Mammary epithelial cell (primary cell): ENCODE measurements at regions of chr16 and their contacts with region 1.

Region 1: GRCh38 chr16:4116337-4117249 is at the start of gene ADCY9:
- DNase-seq: peak; percentile 53
- H3K4me3 ChIP-seq: peak within 1 kb of the TSS; percentile 36 to 63 (median 59)
- H3K27ac ChIP-seq: no peak within 1 kb of the TSS
- H3K4me1 ChIP-seq: peaks cover 20% of the 10 kb centered on the region
- H3K27me3 ChIP-seq: no peaks in the 10 kb centered on the region
- CTCF ChIP-seq: no peak
- total RNA-seq, gene ADCY9: 18.4 to 27.3 TPM

Region 2: GRCh38 chr16:3934491-3935181 is 182.0 kb before region 1 on chr16:
- CTCF ChIA-PET with region 1: no interaction called
- dilution Hi-C with region 1: no loop called
- in situ Hi-C with region 1: no loop called
- intact Hi-C with region 1: no loop called
- DNase-seq: no peak
- H3K4me3 ChIP-seq: no peak overlapping the region
- H3K27ac ChIP-seq: no peak overlapping the region
- H3K4me1 ChIP-seq: peaks cover 5% of the 10 kb centered on the region
- H3K27me3 ChIP-seq: no peaks in the 10 kb centered on the region
- CTCF ChIP-seq: no peak

Region 3: DNA sequence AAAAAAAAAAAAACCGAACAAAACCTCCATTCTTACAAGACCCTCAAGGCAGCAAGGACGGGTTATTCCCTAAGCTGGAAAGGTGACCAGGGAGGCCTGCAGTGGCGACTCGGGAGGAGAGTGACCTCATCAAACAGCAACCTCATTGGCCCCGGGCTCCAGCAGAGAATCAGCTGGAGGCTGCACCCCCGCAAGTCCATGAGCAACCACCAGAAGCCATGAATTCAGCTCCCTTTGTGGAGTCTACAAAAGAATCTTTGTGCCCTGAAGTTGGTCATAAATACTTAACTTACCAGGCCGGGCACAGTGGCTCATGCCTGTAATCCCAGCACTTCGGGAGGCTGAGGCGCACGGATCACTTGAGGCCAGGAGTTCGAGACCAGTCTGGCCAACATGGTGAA is 155.1 kb before region 1 on chr16:
- CTCF ChIA-PET with region 1: no interaction called
- dilution Hi-C with region 1: no loop called
- in situ Hi-C with region 1: no loop called
- intact Hi-C with region 1: no loop called
- DNase-seq: peak; percentile 58
- H3K4me3 ChIP-seq: no peak overlapping the region
- H3K27ac ChIP-seq: no peak overlapping the region
- H3K4me1 ChIP-seq: no peaks in the 10 kb centered on the region
- H3K27me3 ChIP-seq: peaks cover 7% of the 10 kb centered on the region
- CTCF ChIP-seq: no peak

Region 4: GRCh38 chr16:3999479-4000325 is 116.9 kb before region 1 on chr16:
- CTCF ChIA-PET with region 1: no interaction called
- dilution Hi-C with region 1: no loop called
- in situ Hi-C with region 1: no loop called
- intact Hi-C with region 1: loop called (anchors 5 kb)
- DNase-seq: no peak
- H3K4me3 ChIP-seq: no peak overlapping the region
- H3K27ac ChIP-seq: no peak overlapping the region
- H3K4me1 ChIP-seq: no peaks in the 10 kb centered on the region
- H3K27me3 ChIP-seq: no peaks in the 10 kb centered on the region
- CTCF ChIP-seq: no peak

Region 5: DNA sequence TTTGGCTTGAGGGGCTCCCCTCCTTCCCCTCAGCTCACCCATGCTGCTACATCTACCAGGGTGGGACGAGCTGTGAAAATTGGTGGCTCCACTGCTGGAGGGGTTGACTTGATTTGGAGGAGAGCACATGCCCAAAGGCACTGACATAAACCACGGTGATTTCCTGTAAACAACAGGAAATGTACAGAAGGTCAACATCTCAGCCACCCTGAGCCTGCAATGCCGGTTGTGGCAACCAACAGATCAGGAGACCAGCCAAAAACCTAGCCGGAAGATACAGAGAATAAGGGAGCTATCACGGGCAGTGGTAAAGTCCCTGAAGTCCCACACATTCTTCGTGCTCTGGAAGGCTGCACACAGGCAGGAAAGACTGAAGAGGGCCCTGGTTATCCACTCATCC is 56.6 kb before region 1 on chr16:
- CTCF ChIA-PET with region 1: no interaction called
- dilution Hi-C with region 1: loop called (anchors 5 kb)
- in situ Hi-C with region 1: no loop called
- intact Hi-C with region 1: no loop called
- DNase-seq: no peak
- H3K4me3 ChIP-seq: no peak overlapping the region
- H3K27ac ChIP-seq: no peak overlapping the region
- H3K4me1 ChIP-seq: no peaks in the 10 kb centered on the region
- H3K27me3 ChIP-seq: no peaks in the 10 kb centered on the region
- CTCF ChIP-seq: no peak

Region 6: GRCh38 chr16:4166821-4167220 is 50.2 kb after region 1 on chr16:
- CTCF ChIA-PET with region 1: no interaction called
- dilution Hi-C with region 1: loop called (anchors 5 kb)
- in situ Hi-C with region 1: no loop called
- intact Hi-C with region 1: no loop called
- DNase-seq: no peak
- H3K4me3 ChIP-seq: no peak overlapping the region
- H3K27ac ChIP-seq: no peak overlapping the region
- H3K4me1 ChIP-seq: no peaks in the 10 kb centered on the region
- H3K27me3 ChIP-seq: no peaks in the 10 kb centered on the region
- CTCF ChIP-seq: no peak

Region 7: GRCh38 chr16:4217204-4218131 is 100.9 kb after region 1 on chr16:
- CTCF ChIA-PET with region 1: no interaction called
- dilution Hi-C with region 1: loop called (anchors 5 kb)
- in situ Hi-C with region 1: no loop called
- intact Hi-C with region 1: no loop called
- DNase-seq: no peak
- H3K4me3 ChIP-seq: no peak overlapping the region
- H3K27ac ChIP-seq: no peak overlapping the region
- H3K4me1 ChIP-seq: peaks cover 22% of the 10 kb centered on the region
- H3K27me3 ChIP-seq: no peaks in the 10 kb centered on the region
- CTCF ChIP-seq: no peak

Region 8: GRCh38 chr16:4450926-4451619 is 334.5 kb after region 1 on chr16:
- CTCF ChIA-PET with region 1: no interaction called
- dilution Hi-C with region 1: loop called (anchors 10 kb)
- in situ Hi-C with region 1: no loop called
- intact Hi-C with region 1: no loop called
- DNase-seq: no peak
- H3K4me3 ChIP-seq: no peak overlapping the region
- H3K27ac ChIP-seq: no peak overlapping the region
- H3K4me1 ChIP-seq: no peaks in the 10 kb centered on the region
- H3K27me3 ChIP-seq: no peaks in the 10 kb centered on the region
- CTCF ChIP-seq: no peak